B cell (primary cell): ENCODE measurements at regions of chr4 and their contacts with region 1.

Region 1: GRCh38 chr4:155953151-155954114 is at the start of gene CTSO:
- DNase-seq: peak; percentile 85
- ATAC-seq: peak; percentile 89
- H3K4me3 ChIP-seq: peak within 1 kb of the TSS; percentile 87 to 97 (median 89)
- H3K4me3 Mint-ChIP-seq: peak within 1 kb of the TSS; percentile 97
- H3K27ac ChIP-seq: peak within 1 kb of the TSS; percentile 87 to 96
- H3K27ac Mint-ChIP-seq: peak within 1 kb of the TSS; percentile 98
- H3K4me1 ChIP-seq: peaks cover 8 to 9% of the 10 kb centered on the region in 2 donors
- H3K4me1 Mint-ChIP-seq: peaks cover 14% of the 10 kb centered on the region
- H3K27me3 ChIP-seq: no peaks in the 10 kb centered on the region
- H3K27me3 Mint-ChIP-seq: peaks cover 6% of the 10 kb centered on the region
- CTCF ChIP-seq: peak; percentile 81
- total RNA-seq, gene CTSO: 14.0 and 15.5 TPM in 2 replicates

Region 2: GRCh38 chr4:154626793-154627484 is 1326.5 kb before region 1 on chr4:
- CTCF ChIA-PET with region 1: no interaction called
- POLR2A ChIA-PET with region 1: no interaction called
- intact Hi-C with region 1: loop called (anchors 10 kb)
- DNase-seq: peak; percentile 74
- ATAC-seq: peak; percentile 98
- H3K4me3 ChIP-seq: peak overlapping the region in 4 of 5 experiments; percentile 26 to 46 (median 36)
- H3K4me3 Mint-ChIP-seq: peak overlapping the region; percentile 35
- H3K27ac ChIP-seq: no peak overlapping the region
- H3K27ac Mint-ChIP-seq: no peak overlapping the region
- H3K4me1 ChIP-seq: peaks cover 9 to 13% of the 10 kb centered on the region in 2 donors
- H3K4me1 Mint-ChIP-seq: peaks cover 2% of the 10 kb centered on the region
- H3K27me3 ChIP-seq: peaks cover 0 to 33% (median 29%) of the 10 kb centered on the region in 4 experiments
- H3K27me3 Mint-ChIP-seq: peaks cover 34% of the 10 kb centered on the region
- CTCF ChIP-seq: peak; percentile 54

Region 3: DNA sequence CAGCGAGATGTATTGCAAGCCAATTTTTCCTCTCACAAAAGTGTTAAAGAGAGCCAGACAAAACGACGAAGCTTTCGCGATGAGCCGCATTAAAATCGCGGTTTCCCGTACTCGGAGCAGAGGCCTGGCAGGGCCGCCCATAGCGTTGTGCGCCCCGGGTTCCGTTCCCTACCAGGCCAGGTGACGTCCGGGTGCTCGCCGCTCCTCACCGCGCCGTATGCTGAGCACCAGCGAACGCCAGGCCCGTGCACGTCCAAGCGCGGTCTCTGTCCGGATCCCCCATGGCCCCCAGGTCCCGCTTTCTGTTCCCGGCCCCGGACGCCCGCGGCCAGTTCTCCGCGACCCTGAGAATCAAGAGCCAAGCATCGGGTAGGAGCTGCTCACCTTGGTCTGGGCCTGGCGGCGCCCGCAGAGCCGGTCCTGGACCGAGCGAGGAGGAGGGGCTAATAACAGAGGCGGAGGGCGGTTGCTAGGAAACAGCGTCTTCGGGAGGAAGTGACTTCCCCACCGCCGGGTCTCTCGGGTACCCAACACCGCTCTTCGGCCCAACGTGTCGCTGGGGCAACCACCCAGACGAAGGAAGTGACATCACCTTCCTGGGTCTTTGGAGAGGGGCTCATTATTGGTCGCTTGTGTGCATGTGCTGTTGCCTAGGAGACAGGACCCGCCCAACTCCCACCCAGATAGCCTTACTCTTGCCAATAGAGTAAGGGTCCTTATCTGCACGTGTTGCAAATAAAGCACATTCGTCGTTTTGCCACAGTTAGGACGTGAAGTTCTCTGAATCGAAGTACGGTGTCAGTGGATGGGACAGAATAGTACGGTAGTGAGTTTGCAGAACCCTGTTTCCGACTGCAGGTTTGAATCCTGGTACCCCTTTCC is 576.8 kb before region 1 on chr4 and contains the start of gene MAP9:
- CTCF ChIA-PET with region 1: interaction called, 7 read pairs
- POLR2A ChIA-PET with region 1: no interaction called
- intact Hi-C with region 1: loop called (anchors 1 kb)
- DNase-seq: peak; percentile 98
- ATAC-seq: peak; percentile 90
- H3K4me3 ChIP-seq: peak within 1 kb of the TSS; percentile 4 to 80 (median 75)
- H3K4me3 Mint-ChIP-seq: peak within 1 kb of the TSS; percentile 95
- H3K27ac ChIP-seq: peak within 1 kb of the TSS; percentile 78 to 91
- H3K27ac Mint-ChIP-seq: peak within 1 kb of the TSS; percentile 96
- H3K4me1 ChIP-seq: peaks cover 4 to 8% of the 10 kb centered on the region in 2 donors
- H3K4me1 Mint-ChIP-seq: peaks cover 15% of the 10 kb centered on the region
- H3K27me3 ChIP-seq: no peaks in the 10 kb centered on the region
- H3K27me3 Mint-ChIP-seq: no peaks in the 10 kb centered on the region
- CTCF ChIP-seq: no peak
- total RNA-seq, gene MAP9: 16.3 and 19.1 TPM in 2 replicates

Region 4: DNA sequence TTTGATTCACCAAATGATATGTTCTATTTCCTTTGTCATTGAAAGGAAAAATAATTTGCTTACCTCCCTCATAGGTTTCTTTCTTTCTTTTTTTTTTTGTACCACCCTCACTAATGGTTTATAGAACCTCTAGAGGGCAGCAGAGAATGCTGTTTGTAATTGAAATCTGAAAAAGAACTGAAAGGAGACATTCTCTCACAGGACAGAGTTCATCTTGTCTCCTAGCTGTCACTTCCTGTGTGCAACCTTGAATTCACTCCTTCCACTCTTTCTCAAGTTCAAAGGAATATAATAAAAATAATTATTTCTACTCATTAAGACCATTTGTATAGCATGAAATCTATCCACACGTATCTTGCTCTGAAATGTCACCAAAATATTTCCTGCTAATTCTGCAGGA is 143.6 kb before region 1 on chr4:
- CTCF ChIA-PET with region 1: interaction called, 3 read pairs
- POLR2A ChIA-PET with region 1: no interaction called
- intact Hi-C with region 1: loop called (anchors 2 kb)
- DNase-seq: peak; percentile 57
- ATAC-seq: no peak
- H3K4me3 ChIP-seq: no peak overlapping the region
- H3K4me3 Mint-ChIP-seq: no peak overlapping the region
- H3K27ac ChIP-seq: no peak overlapping the region
- H3K27ac Mint-ChIP-seq: no peak overlapping the region
- H3K4me1 ChIP-seq: no peaks in the 10 kb centered on the region
- H3K4me1 Mint-ChIP-seq: no peaks in the 10 kb centered on the region
- H3K27me3 ChIP-seq: no peaks in the 10 kb centered on the region
- H3K27me3 Mint-ChIP-seq: no peaks in the 10 kb centered on the region
- CTCF ChIP-seq: peak; percentile 77

Region 5: GRCh38 chr4:155877974-155878373 is 75.5 kb before region 1 on chr4:
- CTCF ChIA-PET with region 1: no interaction called
- POLR2A ChIA-PET with region 1: no interaction called
- intact Hi-C with region 1: no loop called
- DNase-seq: no peak
- ATAC-seq: no peak
- H3K4me3 ChIP-seq: no peak overlapping the region
- H3K4me3 Mint-ChIP-seq: no peak overlapping the region
- H3K27ac ChIP-seq: no peak overlapping the region
- H3K27ac Mint-ChIP-seq: no peak overlapping the region
- H3K4me1 ChIP-seq: no peaks in the 10 kb centered on the region
- H3K4me1 Mint-ChIP-seq: no peaks in the 10 kb centered on the region
- H3K27me3 ChIP-seq: no peaks in the 10 kb centered on the region
- H3K27me3 Mint-ChIP-seq: no peaks in the 10 kb centered on the region
- CTCF ChIP-seq: no peak